ENCODE measurements at regions of chr2 and their contacts with region 1.

Region 1: GRCh38 chr2:85053802-85054201 is 79.4 kb upstream of the TCF7L1 start:
- DNase-seq: peak; percentile 68 to 70 (median 69)
- ATAC-seq: peak; percentile 99
- H3K4me3 ChIP-seq: no peak overlapping the region
- H3K4me1 ChIP-seq: peaks cover 6% of the 10 kb centered on the region
- CTCF ChIP-seq: no peak

Region 2: DNA sequence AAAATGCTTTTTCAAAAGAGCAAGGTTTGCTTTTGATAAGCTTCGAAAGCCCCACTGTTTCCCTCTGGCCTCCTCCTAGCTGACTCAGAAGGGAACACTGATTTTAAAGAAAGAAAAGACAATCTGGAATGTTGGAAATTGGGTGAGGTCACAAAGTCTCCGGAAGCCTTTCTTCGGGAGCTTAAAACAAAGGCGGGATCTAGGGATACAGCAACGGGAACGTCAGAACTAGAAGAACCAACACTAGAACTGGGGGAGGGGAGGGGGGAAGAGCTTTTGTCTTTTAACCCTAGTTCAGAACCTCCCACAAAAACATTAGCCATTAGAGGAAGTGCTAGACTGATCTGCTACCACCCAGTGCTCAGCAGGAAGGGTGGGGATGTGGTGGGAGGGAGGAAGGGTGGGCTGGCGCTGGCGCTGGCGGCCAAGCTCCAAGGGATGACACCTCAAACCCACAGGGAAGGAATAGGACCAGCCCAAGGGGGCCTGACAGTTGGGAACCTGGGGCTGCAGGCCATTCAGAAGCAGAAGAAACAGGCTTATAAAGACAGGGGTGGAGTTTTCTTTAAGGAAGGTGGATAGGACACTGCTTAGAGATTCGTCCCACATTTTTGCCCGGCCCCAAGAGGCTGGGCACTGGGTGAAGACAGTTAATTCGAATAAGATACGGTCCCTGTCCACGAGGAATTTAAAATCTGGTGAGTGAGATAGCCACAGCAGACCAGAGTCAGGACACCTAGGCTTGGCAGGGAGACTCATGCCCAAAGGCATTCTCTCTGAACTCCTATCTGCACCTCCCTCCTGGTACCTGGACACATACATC is 146.7 kb before region 1 on chr2:
- intact Hi-C with region 1: no loop called
- DNase-seq: peak; percentile 80 to 87 (median 83)
- ATAC-seq: peak; percentile 48
- H3K4me3 ChIP-seq: peak overlapping the region; percentile 97
- H3K4me1 ChIP-seq: peaks cover 12% of the 10 kb centered on the region
- CTCF ChIP-seq: no peak

Region 3: DNA sequence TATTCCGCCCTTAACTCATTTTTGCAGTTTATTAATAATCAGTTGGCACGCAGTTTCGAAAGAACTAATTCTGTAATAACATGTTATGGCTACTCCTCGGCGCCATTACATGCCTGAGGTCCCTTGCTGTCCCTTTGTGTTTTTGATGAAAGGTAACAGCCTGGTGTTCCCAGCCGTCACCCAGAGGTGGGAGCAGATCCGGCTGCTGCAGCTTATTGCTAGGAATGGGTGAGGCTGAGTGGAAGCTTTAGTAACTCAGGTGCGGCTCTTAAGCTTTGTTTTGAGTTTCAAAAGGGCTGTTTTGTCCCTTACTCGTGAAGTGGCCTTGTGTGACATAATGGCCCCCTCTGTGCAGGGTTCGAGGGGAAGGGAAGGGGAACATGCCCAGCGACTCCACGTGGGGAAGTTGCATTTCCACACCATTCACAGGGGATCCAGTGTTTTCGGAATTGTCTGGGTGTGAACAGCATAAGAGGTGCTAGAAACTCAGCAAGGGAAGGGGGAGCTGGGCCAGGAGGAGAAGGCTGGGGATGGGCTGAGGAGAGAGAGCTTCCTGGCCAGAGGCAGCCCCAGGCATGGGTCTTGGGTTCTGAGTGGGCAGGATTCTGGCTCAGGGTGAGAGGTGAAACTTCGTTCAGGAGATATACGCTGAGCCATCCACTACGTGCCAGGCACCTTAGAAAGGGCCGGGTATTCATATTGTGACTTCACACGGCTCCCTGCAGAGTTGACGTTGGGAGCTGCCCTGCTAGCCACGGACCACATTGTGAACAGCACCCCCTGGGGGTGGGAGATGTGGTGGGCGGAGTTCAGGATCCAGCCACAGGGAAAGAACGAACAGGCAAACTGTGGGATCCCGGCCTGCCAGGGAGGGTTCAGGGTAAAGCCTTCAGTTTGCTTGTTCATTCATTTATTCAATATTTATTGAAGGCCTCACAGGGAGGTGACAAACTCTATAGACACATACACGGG is 189.6 kb after region 1 on chr2:
- intact Hi-C with region 1: no loop called
- DNase-seq: peak in 2 of 3 donors; percentile 59 to 60
- ATAC-seq: peak; percentile 60
- H3K4me3 ChIP-seq: no peak overlapping the region
- H3K4me1 ChIP-seq: peaks cover 4% of the 10 kb centered on the region
- CTCF ChIP-seq: no peak

Region 4: GRCh38 chr2:85308896-85309555 is 255.2 kb after region 1 on chr2:
- intact Hi-C with region 1: loop called in 1 of 2 experiments (anchors 10 kb)
- DNase-seq: peak; percentile 62 to 80 (median 75)
- ATAC-seq: peak; percentile 19
- H3K4me3 ChIP-seq: no peak overlapping the region
- H3K4me1 ChIP-seq: peaks cover 22% of the 10 kb centered on the region
- CTCF ChIP-seq: no peak